Mammary epithelial cell (primary cell): ENCODE measurements at regions of chr9 and their contacts with region 1.

Region 1: DNA sequence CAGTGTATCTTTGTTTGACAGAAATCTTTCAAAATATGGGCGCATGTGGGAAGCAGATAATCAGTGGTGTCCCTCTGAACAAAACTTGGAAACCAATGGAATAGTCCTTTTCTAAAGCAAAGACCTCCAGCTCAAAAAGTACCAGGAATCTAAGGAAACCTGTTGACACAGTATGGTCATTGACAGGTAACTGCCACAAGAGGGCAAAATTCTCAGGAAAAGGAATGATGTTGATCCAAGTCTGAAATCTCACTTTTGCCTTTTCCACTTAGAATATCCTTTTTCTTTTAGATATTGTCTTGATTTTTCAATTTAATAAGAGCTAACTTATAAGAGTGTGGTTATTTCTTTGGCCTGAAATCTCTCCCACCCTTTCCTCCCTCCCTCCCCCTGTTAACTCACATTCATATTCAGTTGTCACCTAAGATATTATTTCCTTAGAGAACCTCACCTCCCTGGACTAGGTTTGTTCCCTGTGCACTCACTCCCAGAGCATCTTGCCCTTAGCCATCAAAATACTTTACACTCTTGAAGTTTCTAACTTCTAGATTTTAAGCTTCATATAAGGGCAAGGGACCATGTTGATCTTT is 59.0 kb upstream of the BARX1 start:
- DNase-seq: peak; percentile 24
- H3K4me3 ChIP-seq: no peak overlapping the region
- H3K27ac ChIP-seq: no peak overlapping the region
- H3K4me1 ChIP-seq: no peaks in the 10 kb centered on the region
- H3K27me3 ChIP-seq: no peaks in the 10 kb centered on the region
- CTCF ChIP-seq: peak; percentile 68 to 69

Region 2: DNA sequence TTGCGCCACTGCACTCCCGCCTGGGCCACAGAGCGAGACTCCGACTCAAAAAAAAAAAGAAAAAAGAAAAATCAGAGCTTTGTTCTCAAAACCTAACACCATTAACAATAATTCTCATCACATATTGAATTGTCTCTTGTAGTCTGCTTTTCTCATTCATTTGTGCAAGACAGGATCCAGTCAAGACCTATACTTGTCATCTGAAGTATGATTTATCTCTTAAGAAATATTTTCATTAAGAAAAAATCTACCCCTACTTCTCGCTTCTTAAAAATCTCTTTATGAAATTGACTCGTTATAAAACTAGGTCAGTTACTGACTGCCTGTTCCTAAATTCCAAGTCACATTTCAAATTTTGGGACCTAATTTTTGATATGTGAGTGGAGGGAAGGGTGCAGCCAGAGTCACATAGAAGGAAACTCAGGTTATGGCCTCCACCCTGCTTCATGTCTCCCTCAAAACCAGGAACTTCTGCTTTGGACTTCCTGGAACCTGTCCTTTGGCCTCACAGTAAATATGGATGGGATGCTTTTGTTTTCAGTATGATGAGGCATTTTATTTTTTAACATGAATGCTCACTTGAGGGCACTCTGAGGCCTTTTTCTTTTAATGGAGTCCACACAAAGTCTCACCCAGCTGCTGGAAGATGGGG is 263.9 kb after region 1 on chr9:
- CTCF ChIA-PET with region 1: no interaction called
- dilution Hi-C with region 1: no loop called
- in situ Hi-C with region 1: no loop called
- intact Hi-C with region 1: no loop called
- DNase-seq: no peak
- H3K4me3 ChIP-seq: no peak overlapping the region
- H3K27ac ChIP-seq: no peak overlapping the region
- H3K4me1 ChIP-seq: no peaks in the 10 kb centered on the region
- H3K27me3 ChIP-seq: no peaks in the 10 kb centered on the region
- CTCF ChIP-seq: no peak

Region 3: DNA sequence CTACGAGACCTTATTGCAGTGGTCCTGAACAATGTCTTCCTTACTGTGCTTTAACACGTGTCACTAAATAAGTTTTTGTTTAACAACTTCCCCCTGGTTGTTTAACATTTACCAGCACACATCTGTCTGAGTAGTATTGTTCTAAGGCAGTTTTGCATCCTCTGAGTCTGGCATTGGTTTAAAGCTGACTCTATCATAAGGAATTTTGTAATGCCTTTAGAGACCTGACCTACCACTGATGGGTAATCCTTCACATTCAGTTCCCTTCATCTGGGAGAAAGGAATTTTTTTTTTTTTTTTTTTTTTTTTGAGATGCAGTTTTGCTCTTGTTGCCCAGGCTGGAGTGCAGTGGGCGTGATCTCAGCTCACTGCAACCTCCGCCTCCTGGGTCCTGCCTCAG is 520.7 kb after region 1 on chr9:
- CTCF ChIA-PET with region 1: no interaction called
- dilution Hi-C with region 1: no loop called
- in situ Hi-C with region 1: no loop called
- intact Hi-C with region 1: loop called (anchors 5 kb)
- DNase-seq: no peak
- H3K4me3 ChIP-seq: no peak overlapping the region
- H3K27ac ChIP-seq: no peak overlapping the region
- H3K4me1 ChIP-seq: no peaks in the 10 kb centered on the region
- H3K27me3 ChIP-seq: no peaks in the 10 kb centered on the region
- CTCF ChIP-seq: no peak